ENCODE measurements at regions of chr5 and their contacts with region 1.

Region 1: DNA sequence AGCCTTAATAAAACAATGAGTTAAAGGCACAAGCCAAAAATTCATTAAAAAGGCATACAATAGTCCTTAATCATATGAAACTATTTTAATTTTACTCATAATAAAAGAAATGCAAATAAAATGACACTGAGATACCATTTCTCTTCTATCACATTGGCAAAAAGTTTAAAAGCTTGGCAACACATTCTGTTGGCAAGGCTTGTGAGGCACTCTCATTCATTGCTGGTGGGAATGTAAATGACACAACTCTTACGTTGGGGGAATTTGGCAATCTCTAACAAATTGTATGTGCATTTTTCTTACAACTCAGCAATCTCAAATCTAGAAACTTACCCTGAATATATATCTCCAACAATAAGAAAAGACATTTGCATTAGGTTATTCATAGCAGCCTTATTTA is 111.6 kb downstream of the PRELID2 start:
- DNase-seq: no peak
- H3K4me3 ChIP-seq: no peak overlapping the region
- H3K27ac ChIP-seq: no peak overlapping the region
- H3K4me1 ChIP-seq: no peaks in the 10 kb centered on the region
- H3K27me3 ChIP-seq: no peaks in the 10 kb centered on the region
- CTCF ChIP-seq: no peak

Region 2: GRCh38 chr5:144304688-144305087 is 1418.8 kb before region 1 on chr5:
- CTCF ChIA-PET with region 1: interaction called, 10 read pairs
- POLR2A ChIA-PET with region 1: no interaction called
- intact Hi-C with region 1: no loop called
- DNase-seq: no peak
- H3K4me3 ChIP-seq: no peak overlapping the region
- H3K27ac ChIP-seq: no peak overlapping the region
- H3K4me1 ChIP-seq: no peaks in the 10 kb centered on the region
- H3K27me3 ChIP-seq: peaks cover 10% of the 10 kb centered on the region; the same call in 1 of the 2 replicates
- CTCF ChIP-seq: no peak

Region 3: DNA sequence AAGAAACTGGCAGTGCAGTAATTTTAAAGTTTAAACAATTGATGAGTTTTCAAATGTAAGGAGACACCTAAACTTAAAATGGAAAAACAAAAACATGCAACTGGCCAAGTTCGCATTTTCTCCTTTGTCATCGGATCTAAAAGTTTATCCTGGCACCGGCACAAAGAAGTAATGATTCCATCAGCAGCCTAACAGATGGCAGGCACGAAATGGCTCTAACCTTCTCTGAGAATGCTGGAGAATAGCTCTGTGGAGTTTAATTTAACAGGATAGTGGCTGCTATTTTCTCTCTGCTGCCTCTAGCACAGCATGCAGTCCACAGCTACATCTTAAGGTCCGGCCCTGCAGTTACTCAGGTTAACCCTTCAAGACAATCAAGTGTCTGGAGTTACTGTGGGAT is 29.4 kb after region 1 on chr5:
- CTCF ChIA-PET with region 1: no interaction called
- POLR2A ChIA-PET with region 1: no interaction called
- intact Hi-C with region 1: no loop called
- DNase-seq: no peak
- H3K4me3 ChIP-seq: no peak overlapping the region
- H3K27ac ChIP-seq: no peak overlapping the region
- H3K4me1 ChIP-seq: no peaks in the 10 kb centered on the region
- H3K27me3 ChIP-seq: no peaks in the 10 kb centered on the region
- CTCF ChIP-seq: no peak

Region 4: GRCh38 chr5:147188200-147189108 is 1464.9 kb after region 1 on chr5:
- CTCF ChIA-PET with region 1: no interaction called
- POLR2A ChIA-PET with region 1: no interaction called
- intact Hi-C with region 1: no loop called
- DNase-seq: peak in 1 of 2 experiments; percentile 29
- H3K4me3 ChIP-seq: no peak overlapping the region
- H3K27ac ChIP-seq: no peak overlapping the region
- H3K4me1 ChIP-seq: no peaks in the 10 kb centered on the region
- H3K27me3 ChIP-seq: 0 out of 2 replicates have a peak, but pooled peaks cover 3% of the 10 kb centered on the region
- CTCF ChIP-seq: peak; percentile 90

Region 5: DNA sequence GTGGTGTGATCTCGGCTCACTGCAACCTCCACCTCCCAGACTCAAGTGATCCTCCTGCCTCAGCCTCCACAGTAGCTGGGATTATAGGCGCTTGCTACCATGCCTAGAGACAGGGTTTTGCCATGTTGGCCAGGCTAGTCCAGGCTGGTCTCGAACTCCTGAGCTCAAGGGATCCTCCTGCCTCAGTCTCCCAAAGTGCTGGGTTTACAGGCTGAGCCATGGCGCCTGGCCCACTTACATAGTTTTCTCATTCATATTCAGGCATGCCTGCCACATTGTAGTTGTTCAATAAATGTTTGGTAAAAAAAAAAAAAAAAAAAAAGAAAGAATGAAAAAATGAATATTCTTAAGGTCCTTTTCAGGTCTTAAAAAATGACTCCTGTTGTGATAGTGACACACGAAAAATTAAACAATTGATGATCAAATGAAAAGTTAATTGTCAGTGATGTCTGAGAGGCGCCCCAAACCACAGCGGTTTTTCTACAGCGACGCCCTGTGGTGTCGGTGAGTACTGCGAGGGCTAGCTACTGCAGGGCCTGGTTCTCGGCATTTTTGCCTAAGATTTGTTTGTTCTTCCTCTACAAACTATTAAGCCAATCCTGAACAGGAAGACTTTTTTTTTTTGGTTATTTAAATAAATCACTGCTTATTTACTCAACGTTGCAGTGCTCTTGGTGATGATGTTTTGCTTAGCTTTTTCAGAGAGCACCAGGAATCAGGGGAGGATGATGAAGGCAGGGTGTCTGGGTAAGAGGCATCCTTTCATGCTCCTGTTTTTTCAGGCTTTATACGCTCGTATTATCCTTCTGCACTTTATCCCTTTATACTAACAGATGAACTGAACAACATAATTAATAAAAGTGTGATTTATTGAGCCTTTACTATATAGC is 1853.4 kb after region 1 on chr5:
- CTCF ChIA-PET with region 1: no interaction called
- POLR2A ChIA-PET with region 1: no interaction called
- intact Hi-C with region 1: no loop called
- DNase-seq: peak in 1 of 2 experiments; percentile 33
- H3K4me3 ChIP-seq: no peak overlapping the region
- H3K27ac ChIP-seq: no peak overlapping the region
- H3K4me1 ChIP-seq: no peaks in the 10 kb centered on the region
- H3K27me3 ChIP-seq: peaks cover 5% of the 10 kb centered on the region; the same call in 1 of the 2 replicates
- CTCF ChIP-seq: peak; percentile 76

Measured in PC-9 (cell line).